CD4-positive, alpha-beta memory T cell (primary cell): ENCODE measurements at regions of chr7 and their contacts with region 1.

Region 1: GRCh38 chr7:63925623-63926460 is 72.8 kb upstream of the ZNF722 start:
- DNase-seq: peak; percentile 86 to 96 (median 94)
- H3K4me3 ChIP-seq: peak overlapping the region; percentile 58 to 73
- H3K4me3 Mint-ChIP-seq: peak overlapping the region; percentile 94 to 99 (median 98)
- H3K27ac ChIP-seq: peak overlapping the region; percentile 64
- H3K27ac Mint-ChIP-seq: peak overlapping the region; percentile 90 to 98 (median 97)
- H3K4me1 ChIP-seq: peaks cover 6% of the 10 kb centered on the region
- H3K4me1 Mint-ChIP-seq: peaks cover 3 to 18% (median 12%) of the 10 kb centered on the region in 4 donors
- H3K27me3 ChIP-seq: no peaks in the 10 kb centered on the region
- H3K27me3 Mint-ChIP-seq: no peaks in the 10 kb centered on the region

Region 2: DNA sequence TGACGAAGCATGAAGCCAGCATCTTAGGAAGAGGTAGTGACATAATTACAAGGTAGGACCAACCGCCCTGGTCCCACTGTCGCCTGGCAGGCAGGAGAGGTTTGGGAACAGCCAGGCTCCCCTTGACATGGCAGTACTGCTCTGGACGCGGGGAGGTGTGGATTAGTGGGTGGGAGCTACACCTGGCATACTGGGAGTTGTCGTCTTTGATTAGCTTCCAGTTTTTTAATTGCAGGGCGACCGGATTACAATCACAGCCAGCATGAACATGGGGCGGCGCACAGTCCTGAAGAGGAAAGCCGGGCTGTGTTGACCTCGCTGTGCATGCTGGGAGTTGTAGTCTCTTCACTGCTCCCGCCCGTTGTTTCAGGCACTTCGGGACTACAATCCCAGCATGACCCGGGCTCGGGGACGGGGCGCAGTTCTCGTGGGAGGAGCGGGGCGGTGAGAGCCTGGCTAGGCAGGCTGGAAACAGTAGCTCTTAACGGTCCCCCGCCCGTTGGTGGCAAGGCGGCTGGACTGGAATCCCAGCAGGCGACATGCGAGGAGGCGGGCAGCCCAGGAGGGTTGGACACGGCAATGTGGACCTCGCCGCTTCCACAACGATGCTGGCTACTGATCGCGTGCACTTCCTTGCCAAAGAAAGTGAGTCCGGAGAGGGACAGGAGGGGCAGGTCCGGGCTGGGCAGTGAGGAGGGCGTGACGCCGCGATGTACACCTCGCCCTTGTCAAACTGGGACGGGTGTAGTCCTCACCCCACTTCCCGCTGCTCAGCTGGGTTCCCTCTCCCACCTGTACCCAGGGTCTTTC is 25.2 kb before region 1 on chr7:
- CTCF ChIA-PET with region 1: interaction called, 9 read pairs
- POLR2A ChIA-PET with region 1: interaction called, 60 read pairs
- intact Hi-C with region 1: loop called (anchors 1 kb)
- DNase-seq: peak; percentile 79 to 94 (median 92)
- H3K4me3 ChIP-seq: peak overlapping the region; percentile 41 to 61
- H3K4me3 Mint-ChIP-seq: peak overlapping the region; percentile 93 to 99 (median 96)
- H3K27ac ChIP-seq: peak overlapping the region; percentile 68
- H3K27ac Mint-ChIP-seq: peak overlapping the region; percentile 82 to 99 (median 98)
- H3K4me1 ChIP-seq: no peaks in the 10 kb centered on the region
- H3K4me1 Mint-ChIP-seq: peaks cover 0 to 20% (median 6%) of the 10 kb centered on the region in 4 donors
- H3K27me3 ChIP-seq: no peaks in the 10 kb centered on the region
- H3K27me3 Mint-ChIP-seq: no peaks in the 10 kb centered on the region

Region 3: GRCh38 chr7:64313740-64314491 is 388.1 kb after region 1 on chr7 and contains the start of gene ZNF736:
- CTCF ChIA-PET with region 1: no interaction called
- POLR2A ChIA-PET with region 1: interaction called, 11 read pairs
- intact Hi-C with region 1: loop called (anchors 1 kb)
- DNase-seq: peak; percentile 87 to 93 (median 89)
- H3K4me3 ChIP-seq: peak within 1 kb of the TSS; percentile 88 to 97
- H3K4me3 Mint-ChIP-seq: peak within 1 kb of the TSS; percentile 98 to 99 (median 99)
- H3K27ac ChIP-seq: peak within 1 kb of the TSS; percentile 59
- H3K27ac Mint-ChIP-seq: peak within 1 kb of the TSS; percentile 96 to 99 (median 98)
- H3K4me1 ChIP-seq: peaks cover 27% of the 10 kb centered on the region
- H3K4me1 Mint-ChIP-seq: peaks cover 16 to 50% (median 36%) of the 10 kb centered on the region in 4 donors
- H3K27me3 ChIP-seq: no peaks in the 10 kb centered on the region
- H3K27me3 Mint-ChIP-seq: no peaks in the 10 kb centered on the region
- total RNA-seq, gene ZNF736: 43.6 to 48.2 TPM

Region 4: DNA sequence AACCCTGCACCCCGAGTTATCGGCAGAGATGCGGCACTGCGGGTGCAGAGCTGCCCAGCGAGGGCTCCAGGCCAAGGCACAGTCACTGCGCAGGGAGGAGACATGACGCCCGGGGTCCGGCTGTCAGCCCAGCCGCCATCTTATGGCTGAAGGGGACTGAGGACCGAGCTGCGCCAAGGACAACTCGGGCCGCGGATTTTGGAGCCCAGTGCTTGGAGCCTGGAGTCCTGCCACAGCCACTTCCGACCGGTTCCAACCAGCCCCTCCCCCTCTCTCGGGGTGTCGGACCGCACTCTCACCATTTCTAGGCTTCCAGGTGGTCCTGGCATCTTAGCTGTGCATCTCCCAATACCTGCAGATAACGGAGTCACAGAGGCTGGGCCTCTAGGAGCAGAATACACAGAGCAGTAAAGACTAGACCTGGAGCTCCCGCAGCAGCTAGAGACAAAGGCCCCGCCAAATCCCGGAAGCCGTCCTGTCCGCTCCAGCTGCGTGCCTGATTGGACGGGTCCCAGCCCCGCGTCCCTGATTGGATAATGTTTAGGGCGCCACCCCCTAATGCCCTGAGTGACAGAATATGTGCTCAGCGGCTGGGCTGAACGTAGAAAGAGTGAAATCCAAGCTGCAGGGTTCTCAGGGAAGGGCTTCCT is 636.9 kb after region 1 on chr7 and contains the start of gene ZNF680:
- CTCF ChIA-PET with region 1: no interaction called
- POLR2A ChIA-PET with region 1: interaction called, 4 read pairs
- intact Hi-C with region 1: loop called (anchors 1 kb)
- DNase-seq: peak; percentile 89 to 93 (median 90)
- H3K4me3 ChIP-seq: peak within 1 kb of the TSS; percentile 47 to 70
- H3K4me3 Mint-ChIP-seq: peak within 1 kb of the TSS; percentile 100
- H3K27ac ChIP-seq: peak within 1 kb of the TSS; percentile 57
- H3K27ac Mint-ChIP-seq: peak within 1 kb of the TSS; percentile 97 to 99 (median 99)
- H3K4me1 ChIP-seq: peaks cover 20% of the 10 kb centered on the region
- H3K4me1 Mint-ChIP-seq: peaks cover 21 to 46% (median 36%) of the 10 kb centered on the region in 4 donors
- H3K27me3 ChIP-seq: no peaks in the 10 kb centered on the region
- H3K27me3 Mint-ChIP-seq: no peaks in the 10 kb centered on the region
- total RNA-seq, gene ZNF680: 17.7 to 19.6 TPM

Region 5: GRCh38 chr7:64665980-64666662 is 740.3 kb after region 1 on chr7 and contains the start of gene ZNF107:
- CTCF ChIA-PET with region 1: no interaction called
- POLR2A ChIA-PET with region 1: interaction called, 8 read pairs
- intact Hi-C with region 1: loop called (anchors 1 kb)
- DNase-seq: peak; percentile 86 to 92 (median 88)
- H3K4me3 ChIP-seq: peak within 1 kb of the TSS; percentile 85 to 90
- H3K4me3 Mint-ChIP-seq: peak within 1 kb of the TSS; percentile 97 to 98 (median 97)
- H3K27ac ChIP-seq: peak within 1 kb of the TSS; percentile 92
- H3K27ac Mint-ChIP-seq: peak within 1 kb of the TSS; percentile 97 to 99 (median 98)
- H3K4me1 ChIP-seq: peaks cover 38% of the 10 kb centered on the region
- H3K4me1 Mint-ChIP-seq: peaks cover 42 to 80% (median 59%) of the 10 kb centered on the region in 4 donors
- H3K27me3 ChIP-seq: no peaks in the 10 kb centered on the region
- H3K27me3 Mint-ChIP-seq: no peaks in the 10 kb centered on the region
- total RNA-seq, gene ZNF107: 30.2 to 30.9 TPM

Region 6: DNA sequence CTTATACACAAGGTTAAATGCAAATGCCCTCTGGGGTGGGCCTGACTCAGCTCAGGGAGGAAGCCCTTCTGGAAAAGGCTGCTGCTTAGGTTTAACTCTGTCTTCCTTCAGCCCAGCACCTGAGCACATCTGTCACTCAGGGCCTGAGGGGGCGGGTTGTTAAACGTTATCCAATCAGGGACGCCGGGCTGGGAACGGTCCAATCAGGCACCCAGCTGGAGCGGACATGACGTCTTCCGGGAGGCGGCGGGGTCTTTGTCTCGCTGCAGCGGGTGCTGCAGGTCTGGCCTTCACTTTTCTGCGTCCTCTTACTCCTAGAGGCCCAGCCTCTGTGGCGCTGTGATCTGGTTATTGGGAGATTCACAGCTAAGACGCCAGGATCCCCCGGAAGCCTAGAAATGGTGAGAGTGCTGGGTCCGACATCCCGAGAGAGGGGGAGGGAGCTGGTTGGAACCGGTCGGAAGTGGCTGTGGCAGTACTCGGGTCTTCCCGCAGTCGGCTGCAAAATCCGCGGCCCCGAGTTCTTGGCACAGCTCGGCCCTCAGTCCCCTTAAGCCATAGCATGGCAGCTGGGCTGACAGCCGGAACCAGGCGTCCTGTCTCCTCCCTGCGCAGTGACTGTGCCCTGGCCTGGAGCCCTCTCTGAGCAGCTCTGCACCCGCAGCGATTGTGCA is 868.5 kb after region 1 on chr7 and contains the start of gene ZNF138:
- CTCF ChIA-PET with region 1: no interaction called
- POLR2A ChIA-PET with region 1: no interaction called
- intact Hi-C with region 1: loop called (anchors 1 kb)
- DNase-seq: peak; percentile 92 to 95 (median 93)
- H3K4me3 ChIP-seq: peak within 1 kb of the TSS; percentile 87 to 95
- H3K4me3 Mint-ChIP-seq: peak within 1 kb of the TSS; percentile 97 to 99 (median 99)
- H3K27ac ChIP-seq: peak within 1 kb of the TSS; percentile 75
- H3K27ac Mint-ChIP-seq: peak within 1 kb of the TSS; percentile 97 to 99 (median 98)
- H3K4me1 ChIP-seq: peaks cover 27% of the 10 kb centered on the region
- H3K4me1 Mint-ChIP-seq: peaks cover 18 to 47% (median 30%) of the 10 kb centered on the region in 4 donors
- H3K27me3 ChIP-seq: no peaks in the 10 kb centered on the region
- H3K27me3 Mint-ChIP-seq: no peaks in the 10 kb centered on the region
- total RNA-seq, gene ZNF138: 12.1 to 14.3 TPM

Region 7: GRCh38 chr7:65037740-65038678 is 1112.2 kb after region 1 on chr7:
- CTCF ChIA-PET with region 1: no interaction called
- POLR2A ChIA-PET with region 1: no interaction called
- intact Hi-C with region 1: loop called (anchors 5 kb)
- DNase-seq: peak; percentile 90 to 94 (median 92)
- H3K4me3 ChIP-seq: peak overlapping the region in 1 of 2 donors; percentile 43
- H3K4me3 Mint-ChIP-seq: peak overlapping the region; percentile 68 to 85 (median 81)
- H3K27ac ChIP-seq: peak overlapping the region; percentile 56
- H3K27ac Mint-ChIP-seq: peak overlapping the region; percentile 79 to 93 (median 90)
- H3K4me1 ChIP-seq: peaks cover 14% of the 10 kb centered on the region
- H3K4me1 Mint-ChIP-seq: peaks cover 10 to 17% (median 14%) of the 10 kb centered on the region in 4 donors
- H3K27me3 ChIP-seq: no peaks in the 10 kb centered on the region
- H3K27me3 Mint-ChIP-seq: no peaks in the 10 kb centered on the region